ENCODE measurements at regions of chr11 and their contacts with region 1.

Region 1: DNA sequence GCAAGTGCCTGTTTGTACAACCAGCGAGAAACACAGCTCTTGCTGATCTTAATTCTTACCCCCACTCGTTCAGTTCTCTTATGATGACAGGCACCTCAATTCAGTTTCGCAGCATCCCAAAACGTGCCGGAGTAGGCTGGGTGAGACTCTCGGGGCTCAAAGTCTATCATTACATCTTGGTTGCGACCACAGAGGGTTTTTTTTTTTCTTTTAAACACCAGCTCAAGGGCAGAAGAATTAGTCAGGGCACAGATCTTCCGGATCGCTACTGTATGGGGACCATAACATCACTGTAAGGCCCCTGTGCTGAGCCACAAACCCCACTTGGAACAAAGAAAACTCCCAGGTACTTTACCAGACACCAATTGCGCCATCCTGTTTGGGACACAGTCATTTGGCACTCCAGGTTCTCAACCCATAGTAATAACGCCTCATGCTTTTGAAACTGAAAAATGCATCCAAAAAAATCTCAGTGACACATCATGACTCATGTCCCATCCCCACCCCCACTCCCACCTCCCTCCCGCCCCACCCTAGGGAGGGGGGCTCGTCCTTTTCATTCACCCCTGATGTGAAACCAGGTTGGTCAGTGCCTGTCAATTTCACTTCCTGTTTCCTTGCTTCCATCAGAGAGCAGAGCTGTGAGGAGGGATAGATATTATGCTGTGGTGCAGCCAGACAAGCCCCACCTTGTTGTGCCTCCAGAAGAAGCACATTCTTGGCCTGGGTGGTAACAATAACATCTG is 41.0 kb upstream of the CD5 start:
- DNase-seq: peak; percentile 80 to 81
- H3K4me3 ChIP-seq: peak overlapping the region; percentile 32; the same call in 1 of the 2 replicates
- H3K27ac ChIP-seq: peak overlapping the region; percentile 63
- H3K4me1 ChIP-seq: peaks cover 16% of the 10 kb centered on the region
- H3K27me3 ChIP-seq: no peaks in the 10 kb centered on the region
- CTCF ChIP-seq: no peak

Region 2: DNA sequence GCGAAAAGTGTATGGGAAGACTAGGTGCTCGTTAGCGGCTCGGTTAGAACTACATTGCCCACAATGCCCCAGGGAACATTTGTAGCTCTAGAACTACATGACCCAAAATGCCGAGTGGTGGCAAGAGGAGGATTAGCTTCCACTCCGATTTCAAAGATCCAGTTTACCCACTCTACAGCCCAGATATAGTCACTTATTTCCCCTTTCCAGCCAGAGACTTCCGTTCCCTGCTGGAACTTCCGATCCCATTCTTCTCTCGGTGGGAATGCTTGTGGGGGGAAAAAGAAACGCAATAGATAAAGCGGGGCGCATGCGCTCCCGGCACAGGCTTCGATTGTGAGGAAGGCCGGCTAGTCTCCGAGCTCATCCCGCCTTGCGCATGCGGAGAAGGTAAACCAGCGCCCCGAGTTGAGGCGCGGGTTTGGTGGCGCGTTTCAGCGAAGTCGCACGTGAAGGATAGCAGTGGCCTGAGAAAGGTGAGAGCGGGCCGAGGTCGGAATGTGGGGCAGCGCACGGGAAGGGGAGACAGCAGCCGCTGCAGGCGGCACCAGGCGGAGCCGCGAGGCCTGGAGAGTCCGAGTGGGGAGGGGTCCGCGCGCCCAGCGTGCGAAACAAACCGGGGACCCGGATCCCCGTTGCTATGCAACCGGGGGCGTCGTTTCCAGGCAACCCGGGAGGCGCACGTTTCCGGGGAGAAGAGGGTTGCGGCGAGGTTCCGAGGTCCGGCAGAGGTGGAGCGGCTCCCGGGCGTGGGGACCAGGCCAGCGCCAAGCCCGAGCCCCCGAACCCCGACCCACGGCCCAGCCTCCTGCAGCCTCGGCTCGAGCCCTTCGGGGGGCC is 147.2 kb before region 1 on chr11 and contains the start of gene TMEM109:
- CTCF ChIA-PET with region 1: interaction called, 10 read pairs
- POLR2A ChIA-PET with region 1: no interaction called
- intact Hi-C with region 1: no loop called
- DNase-seq: peak; percentile 81 to 88
- H3K4me3 ChIP-seq: peak within 1 kb of the TSS; percentile 78
- H3K27ac ChIP-seq: peak within 1 kb of the TSS; percentile 62
- H3K4me1 ChIP-seq: peaks cover 36% of the 10 kb centered on the region
- H3K27me3 ChIP-seq: peaks cover 20% of the 10 kb centered on the region; the same call in 1 of the 2 replicates
- CTCF ChIP-seq: no peak
- total RNA-seq, gene TMEM109: 104 and 105 TPM in 2 replicates

Region 3: DNA sequence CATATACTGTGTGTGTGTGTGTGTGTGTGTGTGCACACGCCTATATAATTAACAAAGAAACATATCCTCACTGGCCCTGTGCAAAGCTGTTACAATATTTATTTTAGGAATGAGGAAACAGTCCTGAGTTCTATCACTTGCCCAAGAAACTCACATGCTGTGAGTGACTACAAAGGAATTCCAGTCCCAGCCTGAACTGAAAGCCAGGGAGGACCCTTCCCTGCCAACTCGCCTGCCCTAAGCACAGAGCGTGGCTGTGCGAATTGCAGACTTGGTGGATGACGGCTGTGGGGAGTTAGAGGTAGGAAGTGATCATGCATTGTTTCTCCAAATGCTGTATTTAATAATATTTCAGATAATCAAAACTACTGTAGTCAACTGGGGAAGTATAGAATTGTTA is 14.6 kb after region 1 on chr11:
- CTCF ChIA-PET with region 1: no interaction called
- POLR2A ChIA-PET with region 1: no interaction called
- intact Hi-C with region 1: loop called (anchors 1 kb)
- DNase-seq: peak; percentile 77 to 93
- H3K4me3 ChIP-seq: no peak overlapping the region
- H3K27ac ChIP-seq: peak overlapping the region; percentile 10; the same call in 1 of the 2 replicates
- H3K4me1 ChIP-seq: peaks cover 14% of the 10 kb centered on the region; the same call in 1 of the 2 replicates
- H3K27me3 ChIP-seq: no peaks in the 10 kb centered on the region
- CTCF ChIP-seq: no peak

Region 4: DNA sequence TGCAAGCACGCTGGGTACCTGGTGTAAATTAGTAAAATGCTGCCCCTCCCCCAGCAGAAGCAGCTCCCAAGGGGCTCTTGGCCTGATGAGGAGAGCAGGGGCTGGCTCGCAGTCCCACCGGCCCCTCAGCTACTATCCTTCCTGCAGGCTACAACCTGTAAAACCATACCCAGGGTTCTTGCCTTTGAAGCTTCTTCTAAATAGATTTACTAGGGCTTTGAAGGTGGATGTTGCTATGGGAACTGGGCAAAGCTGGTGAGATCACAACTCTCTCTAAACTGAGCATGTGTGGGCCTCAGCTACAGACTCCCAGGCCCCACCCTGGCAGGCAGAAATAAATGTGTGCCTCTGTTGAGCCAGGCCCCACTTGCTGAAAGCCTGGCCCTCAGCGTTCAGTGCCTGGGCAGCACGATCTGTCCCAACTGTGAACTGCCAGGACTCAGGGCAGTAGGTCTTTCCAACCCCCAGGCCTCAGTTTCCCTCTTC is 59.5 kb after region 1 on chr11:
- CTCF ChIA-PET with region 1: interaction called, 5 read pairs
- POLR2A ChIA-PET with region 1: no interaction called
- intact Hi-C with region 1: loop called (anchors 2 kb)
- DNase-seq: peak in 1 of 2 experiments; percentile 25
- H3K4me3 ChIP-seq: no peak overlapping the region
- H3K27ac ChIP-seq: no peak overlapping the region
- H3K4me1 ChIP-seq: peaks cover 14% of the 10 kb centered on the region; the same call in 1 of the 2 replicates
- H3K27me3 ChIP-seq: no peaks in the 10 kb centered on the region
- CTCF ChIP-seq: no peak

Region 5: GRCh38 chr11:61161190-61162091 is 100.2 kb after region 1 on chr11 and contains the start of gene VPS37C:
- CTCF ChIA-PET with region 1: interaction called, 10 read pairs
- POLR2A ChIA-PET with region 1: no interaction called
- intact Hi-C with region 1: no loop called
- DNase-seq: peak; percentile 76 to 96
- H3K4me3 ChIP-seq: peak within 1 kb of the TSS; percentile 66
- H3K27ac ChIP-seq: peak within 1 kb of the TSS; percentile 81
- H3K4me1 ChIP-seq: peaks cover 67% of the 10 kb centered on the region
- H3K27me3 ChIP-seq: no peaks in the 10 kb centered on the region
- CTCF ChIP-seq: no peak; the same call in 1 of the 2 replicates
- total RNA-seq, gene VPS37C: 27.1 and 29.0 TPM in 2 replicates

Measured in PC-9 (cell line).